ENCODE measurements at regions of chr13 and their contacts with region 1.

Region 1: GRCh38 chr13:100063333-100063732 is 25.6 kb upstream of the PCCA start:
- DNase-seq: no peak
- H3K4me3 ChIP-seq: no peak overlapping the region
- H3K27me3 ChIP-seq: no peaks in the 10 kb centered on the region
- CTCF ChIP-seq: no peak

Region 2: DNA sequence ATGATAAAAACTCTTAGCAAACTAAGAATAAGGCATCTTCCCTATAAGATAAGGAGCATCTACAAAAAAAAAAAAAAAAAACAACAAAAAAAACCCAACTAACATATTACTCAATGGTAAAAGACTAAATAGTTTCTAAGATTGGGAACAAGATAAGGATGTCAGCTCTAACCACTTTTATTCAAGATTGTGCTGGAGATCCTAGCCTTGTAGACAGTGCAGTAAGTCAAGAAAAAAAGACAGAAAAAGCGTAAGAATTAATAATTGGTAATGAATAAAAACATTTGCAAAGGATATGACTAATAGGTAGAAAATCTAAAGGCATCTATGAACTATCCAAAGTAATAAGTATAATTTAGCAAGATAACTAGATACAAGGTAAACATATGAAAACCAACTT is 48.7 kb before region 1 on chr13:
- CTCF ChIA-PET with region 1: no interaction called
- POLR2A ChIA-PET with region 1: interaction called, 22 read pairs
- DNase-seq: no peak
- H3K4me3 ChIP-seq: no peak overlapping the region
- H3K27me3 ChIP-seq: no peaks in the 10 kb centered on the region; the same call in 1 of the 2 replicates
- CTCF ChIP-seq: no peak